Posterior vena cava (tissue), 2 donors: ENCODE measurements at regions of chr3 and their contacts with region 1.

Region 1: DNA sequence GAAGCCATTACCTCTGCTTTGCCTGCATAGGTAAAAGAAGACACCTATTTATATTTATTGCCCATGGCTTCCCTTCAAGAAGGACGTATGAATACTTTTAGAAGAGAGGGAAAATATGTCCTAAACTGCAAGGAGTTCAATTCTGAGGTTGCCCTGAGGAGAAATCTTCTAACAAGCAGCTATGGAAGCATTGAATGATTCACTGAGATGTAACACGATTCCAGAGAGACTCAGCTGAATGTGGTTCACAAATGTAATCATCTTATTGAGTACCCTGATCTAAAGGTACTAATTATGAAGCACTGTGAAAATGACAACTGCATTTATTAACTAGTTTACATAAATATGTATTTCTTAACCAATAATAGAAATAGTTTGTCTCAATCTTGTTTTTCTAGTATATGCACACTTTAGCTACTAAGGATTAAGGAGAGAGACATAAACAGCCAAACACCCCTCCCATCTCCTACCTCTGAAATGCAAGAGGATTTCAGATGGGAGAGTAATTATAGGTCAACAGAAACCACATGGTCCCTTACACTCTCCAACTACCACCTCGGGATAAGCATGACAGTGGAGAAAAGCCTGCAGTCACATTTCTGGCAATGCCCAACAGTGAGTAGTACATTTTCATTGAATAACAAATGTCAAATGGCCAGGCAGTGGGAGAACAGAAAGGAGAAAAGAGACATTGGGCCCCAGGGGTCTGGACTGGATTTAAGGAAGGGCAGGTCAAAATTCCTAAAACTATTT is 506.2 kb upstream of the IL12A start:
- DNase-seq: no peak

Region 2: DNA sequence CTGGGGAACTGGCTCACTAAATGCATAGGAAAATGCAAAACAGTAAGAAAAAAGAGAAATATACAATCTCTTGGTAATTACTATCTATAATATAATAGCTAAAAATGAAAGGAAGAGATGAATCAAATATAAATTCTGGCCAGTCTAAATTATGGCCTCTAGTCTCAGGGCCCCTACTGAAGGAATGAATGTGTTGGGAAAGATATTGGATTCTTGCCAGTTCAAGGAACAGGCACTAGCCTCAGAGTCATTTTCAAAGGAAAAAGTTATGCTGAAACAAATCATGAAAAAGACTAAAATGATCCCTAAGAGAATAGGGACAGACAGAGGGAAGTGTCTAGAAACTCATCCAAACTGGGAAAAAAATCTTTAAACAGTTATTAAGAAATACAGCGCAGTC is 805.2 kb after region 1 on chr3:
- intact Hi-C with region 1: loop called in 1 of 2 experiments (anchors 5 kb)
- DNase-seq: no peak